ENCODE measurements at regions of chr22 and their contacts with region 1.

Region 1: GRCh38 chr22:46774253-46774979 is 12.0 kb downstream of the TBC1D22A start:
- DNase-seq: peak; percentile 39
- H3K4me3 Mint-ChIP-seq: peak overlapping the region; percentile 75
- H3K27ac Mint-ChIP-seq: peak overlapping the region; percentile 90
- H3K4me1 Mint-ChIP-seq: peaks cover 77% of the 10 kb centered on the region
- H3K27me3 Mint-ChIP-seq: no peaks in the 10 kb centered on the region

Region 2: GRCh38 chr22:46791201-46791731 is 16.9 kb after region 1 on chr22:
- CTCF ChIA-PET with region 1: interaction called, 13 read pairs
- POLR2A ChIA-PET with region 1: interaction called, 27 read pairs
- DNase-seq: peak; percentile 85
- H3K4me3 Mint-ChIP-seq: peak overlapping the region; percentile 78
- H3K27ac Mint-ChIP-seq: peak overlapping the region; percentile 100
- H3K4me1 Mint-ChIP-seq: peaks cover 57% of the 10 kb centered on the region
- H3K27me3 Mint-ChIP-seq: no peaks in the 10 kb centered on the region

Measured in activated CD4-positive, alpha-beta memory T cell treated with anti-CD3 and anti-CD28 coated beads, Interleukin-2, amount 10 ng/mL, durations not matched to agents 7 days and 5 days (primary cell).